Activated naive CD4-positive, alpha-beta T cell treated with anti-CD3 and anti-CD28 coated beads for 36 hours (primary cell): ENCODE measurements at regions of chr1 and their contacts with region 1.

Region 1: DNA sequence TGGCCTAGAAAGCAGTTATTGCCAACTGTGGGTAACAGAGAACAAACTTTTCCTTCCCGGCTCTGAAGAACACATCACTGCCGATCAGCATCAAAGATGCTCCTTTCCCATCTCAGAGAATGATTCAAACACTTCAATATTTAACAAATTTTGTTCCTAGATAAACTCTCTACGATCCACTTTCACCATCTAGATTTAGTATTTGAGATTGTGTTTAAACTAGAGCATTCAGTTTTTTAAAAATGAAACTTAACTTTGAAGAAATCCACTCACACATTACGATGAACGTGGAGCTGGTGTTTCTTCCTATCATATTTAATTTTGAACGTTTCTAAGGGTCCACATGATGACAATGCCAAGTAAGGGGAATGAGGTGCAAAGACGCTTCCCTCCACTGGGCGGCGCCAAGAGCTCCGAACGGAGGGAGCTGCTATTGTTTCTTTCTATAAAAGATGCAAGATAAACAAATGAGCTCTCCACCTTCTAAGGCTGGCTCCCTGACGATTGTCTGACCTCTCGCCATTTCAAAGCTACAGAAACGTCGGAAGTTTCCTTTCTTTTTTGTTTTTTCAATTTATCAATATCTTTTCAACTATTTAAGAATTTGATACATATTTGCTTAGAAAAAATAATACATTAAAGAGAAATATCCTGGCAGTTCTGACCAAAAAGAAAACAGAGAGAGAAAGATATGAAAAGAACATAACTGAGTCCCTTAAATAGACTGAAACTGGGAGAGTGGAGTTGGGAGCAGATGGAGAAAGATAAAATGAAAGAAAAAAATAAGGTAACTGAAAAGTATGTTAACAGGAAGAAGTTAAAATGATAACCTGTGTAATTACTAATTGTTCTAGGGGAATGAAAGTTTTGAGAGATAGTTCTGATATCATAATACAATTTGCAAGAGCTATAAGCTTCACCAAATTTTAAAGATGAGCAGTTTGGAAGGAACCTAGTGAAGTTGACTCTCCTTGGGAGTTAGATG is 4.4 kb upstream of the BARHL2 start:
- DNase-seq: peak; percentile 72
- H3K4me3 Mint-ChIP-seq: no peak overlapping the region
- H3K27ac Mint-ChIP-seq: no peak overlapping the region
- H3K4me1 Mint-ChIP-seq: peaks cover 58% of the 10 kb centered on the region
- H3K27me3 Mint-ChIP-seq: peaks cover 83% of the 10 kb centered on the region

Region 2: GRCh38 chr1:90114521-90115141 is 606.9 kb before region 1 on chr1:
- CTCF ChIA-PET with region 1: no interaction called
- intact Hi-C with region 1: loop called (anchors 1 kb)
- DNase-seq: no peak
- H3K4me3 Mint-ChIP-seq: no peak overlapping the region
- H3K27ac Mint-ChIP-seq: no peak overlapping the region
- H3K4me1 Mint-ChIP-seq: no peaks in the 10 kb centered on the region
- H3K27me3 Mint-ChIP-seq: peaks cover 27% of the 10 kb centered on the region

Region 3: DNA sequence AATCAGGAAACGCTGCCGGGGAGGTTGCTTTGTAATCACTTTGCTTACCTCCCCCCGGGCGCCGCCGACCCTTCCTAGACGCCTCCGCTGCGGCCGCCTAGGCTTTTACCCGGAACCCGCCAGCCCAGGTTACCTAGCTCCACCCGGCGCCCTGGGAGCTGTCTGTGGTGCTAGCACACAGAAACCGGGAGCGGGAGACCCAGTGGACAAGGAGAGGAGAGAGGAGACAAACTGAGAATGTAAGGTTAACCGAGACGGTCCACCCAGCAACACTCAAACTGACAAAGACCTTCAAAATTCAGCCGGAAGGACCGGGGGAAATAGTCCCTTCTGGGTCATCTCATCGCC is 14.2 kb before region 1 on chr1:
- CTCF ChIA-PET with region 1: interaction called, 11 read pairs
- intact Hi-C with region 1: loop called (anchors 1 kb)
- DNase-seq: peak; percentile 44
- H3K4me3 Mint-ChIP-seq: peak overlapping the region; percentile 56
- H3K27ac Mint-ChIP-seq: no peak overlapping the region
- H3K4me1 Mint-ChIP-seq: peaks cover 12% of the 10 kb centered on the region
- H3K27me3 Mint-ChIP-seq: peaks cover 80% of the 10 kb centered on the region

Region 4: GRCh38 chr1:90964444-90965035 is 243.0 kb after region 1 on chr1:
- CTCF ChIA-PET with region 1: interaction called, 4 read pairs
- intact Hi-C with region 1: loop called (anchors 1 kb)
- DNase-seq: no peak
- H3K4me3 Mint-ChIP-seq: no peak overlapping the region
- H3K27ac Mint-ChIP-seq: no peak overlapping the region
- H3K4me1 Mint-ChIP-seq: peaks cover 40% of the 10 kb centered on the region
- H3K27me3 Mint-ChIP-seq: no peaks in the 10 kb centered on the region

Region 5: GRCh38 chr1:91404151-91405012 is 682.9 kb after region 1 on chr1 and contains the start of gene HFM1:
- CTCF ChIA-PET with region 1: no interaction called
- intact Hi-C with region 1: loop called (anchors 5 kb)
- DNase-seq: peak; percentile 63
- H3K4me3 Mint-ChIP-seq: peak within 1 kb of the TSS; percentile 72
- H3K27ac Mint-ChIP-seq: no peak within 1 kb of the TSS
- H3K4me1 Mint-ChIP-seq: peaks cover 2% of the 10 kb centered on the region
- H3K27me3 Mint-ChIP-seq: peaks cover 42% of the 10 kb centered on the region
- total RNA-seq, gene HFM1: not detected